ENCODE measurements at regions of chr12 and their contacts with region 1.

Region 1: GRCh38 chr12:28190321-28191050 is at the start of gene CCDC91:
- DNase-seq: peak; percentile 93
- ATAC-seq: peak; percentile 83
- H3K4me3 Mint-ChIP-seq: peak within 1 kb of the TSS; percentile 89
- H3K27ac Mint-ChIP-seq: peak within 1 kb of the TSS; percentile 99
- H3K4me1 Mint-ChIP-seq: peaks cover 65% of the 10 kb centered on the region
- H3K27me3 Mint-ChIP-seq: no peaks in the 10 kb centered on the region
- total RNA-seq, gene CCDC91: 13.9 to 16.0 TPM

Region 2: DNA sequence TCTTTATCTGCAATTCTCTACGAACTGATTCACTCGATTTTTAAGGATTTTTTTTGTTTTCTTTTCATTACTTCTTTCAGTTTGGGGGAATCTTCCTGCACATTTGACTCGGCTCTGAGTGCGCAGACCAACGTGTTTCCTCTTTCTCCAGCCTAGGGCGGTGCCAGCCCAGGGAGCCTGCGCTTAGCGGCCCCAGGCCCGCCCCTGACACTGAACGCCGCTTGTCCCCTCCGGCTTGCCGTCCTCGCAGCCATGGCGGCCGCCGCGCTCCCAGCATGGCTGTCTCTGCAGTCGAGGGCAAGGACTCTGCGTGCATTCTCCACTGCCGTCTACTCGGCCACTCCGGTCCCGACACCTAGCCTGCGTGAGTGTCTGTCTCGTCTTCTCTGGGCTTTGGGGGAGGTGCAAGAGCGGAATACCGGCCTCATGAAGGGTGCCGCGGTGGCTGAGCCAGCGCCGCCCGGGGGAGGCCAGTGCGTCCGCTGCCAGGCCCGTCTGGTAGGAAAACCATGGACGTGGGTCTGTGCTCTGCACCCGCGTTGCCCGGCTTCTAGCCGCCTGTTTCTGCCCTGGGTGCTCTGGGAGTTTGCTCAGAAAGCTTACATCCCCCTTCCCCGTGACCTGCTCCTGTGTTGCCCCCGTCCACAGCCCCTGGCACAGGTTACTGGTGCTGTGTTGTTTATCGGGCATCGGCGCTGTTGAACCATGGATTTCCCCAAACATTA is 479.7 kb before region 1 on chr12 and contains the start of gene MRPS35:
- CTCF ChIA-PET with region 1: no interaction called
- POLR2A ChIA-PET with region 1: no interaction called
- intact Hi-C with region 1: loop called in 1 of 2 experiments (anchors 1 kb)
- DNase-seq: peak; percentile 95
- ATAC-seq: peak; percentile 98
- H3K4me3 Mint-ChIP-seq: peak within 1 kb of the TSS; percentile 94
- H3K27ac Mint-ChIP-seq: peak within 1 kb of the TSS; percentile 94
- H3K4me1 Mint-ChIP-seq: peaks cover 28% of the 10 kb centered on the region
- H3K27me3 Mint-ChIP-seq: no peaks in the 10 kb centered on the region
- total RNA-seq, gene MRPS35: 58.5 to 62.1 TPM

Region 3: GRCh38 chr12:27969624-27970400 is 220.7 kb before region 1 on chr12:
- CTCF ChIA-PET with region 1: no interaction called
- POLR2A ChIA-PET with region 1: no interaction called
- intact Hi-C with region 1: loop called in 1 of 2 experiments (anchors 10 kb)
- DNase-seq: peak; percentile 77
- ATAC-seq: peak; percentile 77
- H3K4me3 Mint-ChIP-seq: peak overlapping the region; percentile 70
- H3K27ac Mint-ChIP-seq: no peak overlapping the region
- H3K4me1 Mint-ChIP-seq: peaks cover 25% of the 10 kb centered on the region
- H3K27me3 Mint-ChIP-seq: peaks cover 76% of the 10 kb centered on the region

Region 4: DNA sequence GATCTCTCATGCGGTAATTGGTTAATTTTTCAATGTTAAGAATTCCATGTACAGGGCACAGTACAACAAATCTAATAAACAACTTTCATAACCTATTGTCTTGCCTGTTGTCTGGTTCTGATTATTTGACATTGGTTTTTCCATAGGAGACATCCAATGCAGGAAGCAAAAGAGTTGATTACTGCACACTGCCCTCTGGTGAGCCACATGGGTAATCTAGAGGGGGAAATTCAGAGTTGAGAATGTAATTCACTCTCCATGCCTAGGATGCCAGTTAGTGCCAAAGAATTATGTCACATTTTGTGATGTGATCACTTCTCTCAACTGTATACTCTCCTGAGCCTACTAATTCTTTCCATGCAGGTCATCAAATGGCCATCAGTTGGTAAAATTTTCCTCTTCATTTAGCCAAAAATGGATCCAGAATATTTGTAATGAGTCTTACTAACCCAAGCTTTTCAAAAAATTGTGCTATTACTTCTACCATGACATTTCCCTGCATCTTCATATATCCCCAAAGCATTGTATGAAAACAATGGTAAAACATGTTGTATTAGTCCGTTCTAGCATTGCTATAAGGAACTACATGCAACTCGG is 18.0 kb before region 1 on chr12:
- CTCF ChIA-PET with region 1: no interaction called
- POLR2A ChIA-PET with region 1: no interaction called
- intact Hi-C with region 1: no loop called
- DNase-seq: no peak
- ATAC-seq: no peak
- H3K4me3 Mint-ChIP-seq: no peak overlapping the region
- H3K27ac Mint-ChIP-seq: no peak overlapping the region
- H3K4me1 Mint-ChIP-seq: peaks cover 10% of the 10 kb centered on the region
- H3K27me3 Mint-ChIP-seq: no peaks in the 10 kb centered on the region

Region 5: GRCh38 chr12:28253161-28253641 is 62.7 kb after region 1 on chr12:
- CTCF ChIA-PET with region 1: interaction called, 3 read pairs
- POLR2A ChIA-PET with region 1: interaction called, 4 read pairs
- intact Hi-C with region 1: loop called (anchors 1 kb)
- DNase-seq: peak; percentile 72
- ATAC-seq: peak; percentile 95
- H3K4me3 Mint-ChIP-seq: peak overlapping the region; percentile 34
- H3K27ac Mint-ChIP-seq: peak overlapping the region; percentile 87
- H3K4me1 Mint-ChIP-seq: peaks cover 69% of the 10 kb centered on the region
- H3K27me3 Mint-ChIP-seq: no peaks in the 10 kb centered on the region

Region 6: GRCh38 chr12:29380536-29381523 is 1190.3 kb after region 1 on chr12 and contains the start of gene ERGIC2:
- CTCF ChIA-PET with region 1: interaction called, 3 read pairs
- POLR2A ChIA-PET with region 1: no interaction called
- intact Hi-C with region 1: loop called in 1 of 2 experiments (anchors 5 kb)
- DNase-seq: peak; percentile 93
- ATAC-seq: peak; percentile 95
- H3K4me3 Mint-ChIP-seq: peak within 1 kb of the TSS; percentile 92
- H3K27ac Mint-ChIP-seq: peak within 1 kb of the TSS; percentile 93
- H3K4me1 Mint-ChIP-seq: peaks cover 42% of the 10 kb centered on the region
- H3K27me3 Mint-ChIP-seq: no peaks in the 10 kb centered on the region
- total RNA-seq, gene ERGIC2: 104 to 151 TPM